ENCODE measurements at regions of chr9 and their contacts with region 1.

Region 1: GRCh38 chr9:69121828-69122548 is 52.1 kb upstream of the TJP2 start:
- DNase-seq: no peak
- ATAC-seq: peak; percentile 36
- H3K4me3 ChIP-seq: peak overlapping the region; percentile 75 to 85
- H3K27ac ChIP-seq: peak overlapping the region; percentile 100
- H3K4me1 ChIP-seq: peaks cover 22 to 47% of the 10 kb centered on the region in 2 experiments
- H3K27me3 ChIP-seq: no peaks in the 10 kb centered on the region
- CTCF ChIP-seq: no peak
- POLR2A ChIP-seq: no peak
- RAD21 ChIP-seq: 0 out of 2 replicates have a peak, but pooled peaks have one; percentile 1

Region 2: GRCh38 chr9:69056191-69056815 is 65.7 kb before region 1 on chr9:
- CTCF ChIA-PET with region 1: interaction called, 4 read pairs
- POLR2A ChIA-PET with region 1: no interaction called
- RAD21 ChIA-PET with region 1: interaction called in 1 of 2 experiments, 3 read pairs
- intact Hi-C with region 1: loop called (anchors 1 kb)
- DNase-seq: no peak
- ATAC-seq: no peak
- H3K4me3 ChIP-seq: no peak overlapping the region
- H3K27ac ChIP-seq: no peak overlapping the region
- H3K4me1 ChIP-seq: no peaks in the 10 kb centered on the region
- H3K27me3 ChIP-seq: no peaks in the 10 kb centered on the region
- CTCF ChIP-seq: no peak
- POLR2A ChIP-seq: no peak
- RAD21 ChIP-seq: no peak

Region 3: GRCh38 chr9:69097923-69098593 is 23.9 kb before region 1 on chr9:
- CTCF ChIA-PET with region 1: no interaction called
- POLR2A ChIA-PET with region 1: no interaction called
- RAD21 ChIA-PET with region 1: no interaction called
- intact Hi-C with region 1: no loop called
- DNase-seq: no peak
- ATAC-seq: no peak
- H3K4me3 ChIP-seq: no peak overlapping the region
- H3K27ac ChIP-seq: no peak overlapping the region
- H3K4me1 ChIP-seq: peaks cover 0 to 6% of the 10 kb centered on the region in 2 experiments; a peak in 1 of 4 replicates
- H3K27me3 ChIP-seq: no peaks in the 10 kb centered on the region
- CTCF ChIP-seq: no peak
- POLR2A ChIP-seq: no peak
- RAD21 ChIP-seq: no peak

Measured in HCT116 (cell line).